ENCODE measurements at regions of chr7 and their contacts with region 1.

Region 1: DNA sequence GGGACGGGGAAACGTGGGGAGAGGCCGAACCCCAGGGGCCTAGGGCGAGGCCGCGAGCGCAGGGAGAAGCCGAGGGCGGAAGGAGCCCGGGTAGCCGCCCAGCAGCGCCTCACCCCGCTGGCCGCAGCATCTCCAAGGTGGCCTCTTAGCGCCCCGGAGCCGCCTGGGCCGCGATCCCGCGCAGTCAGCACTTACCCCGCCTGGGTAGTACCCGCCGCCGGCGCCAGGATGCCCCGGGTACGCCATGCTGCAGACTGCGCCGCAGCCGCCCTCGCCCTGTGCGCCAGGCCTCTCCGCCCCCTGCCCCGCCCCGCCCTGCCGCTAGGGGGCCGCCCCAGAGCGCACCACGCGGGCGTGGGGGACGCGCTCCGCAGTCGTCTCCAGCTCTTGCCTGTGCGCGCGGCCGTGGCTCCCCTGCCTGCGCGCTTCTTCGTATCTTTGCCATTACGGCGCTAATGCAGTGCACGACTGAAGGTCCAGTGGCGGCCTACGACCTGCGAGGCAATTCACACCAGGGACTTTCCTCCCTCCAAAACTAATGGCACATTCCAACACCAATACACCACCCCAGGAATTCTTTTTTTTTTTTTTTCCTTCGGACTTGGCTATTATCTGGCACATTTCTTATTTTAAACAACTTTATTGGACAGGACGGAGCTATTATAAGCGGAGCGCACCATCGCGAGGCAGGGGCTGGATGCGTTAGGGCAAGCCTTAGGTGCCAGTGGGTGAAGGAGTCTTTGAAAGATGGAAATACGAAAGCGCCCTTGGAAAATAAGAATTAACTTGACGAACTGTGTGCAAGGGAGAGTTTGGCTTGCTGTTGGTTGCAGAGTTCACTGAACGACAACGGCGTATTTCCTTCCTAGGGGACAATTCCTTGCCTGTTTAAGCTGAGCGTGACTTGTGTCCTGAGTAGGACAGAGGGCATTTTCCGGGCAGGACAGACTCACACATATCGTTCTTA is at the start of gene SRI:
- DNase-seq: peak; percentile 79 to 93
- H3K4me3 ChIP-seq: peak within 1 kb of the TSS; percentile 77
- H3K27ac ChIP-seq: peak within 1 kb of the TSS; percentile 97
- H3K4me1 ChIP-seq: peaks cover 46% of the 10 kb centered on the region
- H3K27me3 ChIP-seq: no peaks in the 10 kb centered on the region
- CTCF ChIP-seq: peak; percentile 88
- total RNA-seq, gene SRI: 235 and 269 TPM in 2 replicates

Region 2: GRCh38 chr7:87574630-87575029 is 645.4 kb before region 1 on chr7:
- CTCF ChIA-PET with region 1: no interaction called
- POLR2A ChIA-PET with region 1: no interaction called
- intact Hi-C with region 1: no loop called
- DNase-seq: peak in 1 of 2 experiments; percentile 40
- H3K4me3 ChIP-seq: no peak overlapping the region
- H3K27ac ChIP-seq: no peak overlapping the region
- H3K4me1 ChIP-seq: no peaks in the 10 kb centered on the region
- H3K27me3 ChIP-seq: no peaks in the 10 kb centered on the region
- CTCF ChIP-seq: no peak

Region 3: GRCh38 chr7:87876040-87876868 is 343.8 kb before region 1 on chr7 and contains the starts of genes DBF4 and SLC25A40:
- CTCF ChIA-PET with region 1: no interaction called
- POLR2A ChIA-PET with region 1: no interaction called
- intact Hi-C with region 1: loop called (anchors 5 kb)
- DNase-seq: peak; percentile 91 to 99
- H3K4me3 ChIP-seq: peak within 1 kb of the TSS; percentile 92
- H3K27ac ChIP-seq: peak within 1 kb of the TSS; percentile 85
- H3K4me1 ChIP-seq: peaks cover 28% of the 10 kb centered on the region
- H3K27me3 ChIP-seq: no peaks in the 10 kb centered on the region
- CTCF ChIP-seq: no peak
- total RNA-seq, gene DBF4: 47.9 and 52.7 TPM in 2 replicates
- total RNA-seq, gene SLC25A40: 33.5 and 47.7 TPM in 2 replicates

Region 4: GRCh38 chr7:87933945-87934698 is 285.9 kb before region 1 on chr7 and contains the start of gene ADAM22:
- CTCF ChIA-PET with region 1: interaction called, 3 read pairs
- POLR2A ChIA-PET with region 1: no interaction called
- intact Hi-C with region 1: loop called (anchors 10 kb)
- DNase-seq: peak; percentile 72 to 91
- H3K4me3 ChIP-seq: peak within 1 kb of the TSS; percentile 77
- H3K27ac ChIP-seq: no peak within 1 kb of the TSS
- H3K4me1 ChIP-seq: no peaks in the 10 kb centered on the region
- H3K27me3 ChIP-seq: no peaks in the 10 kb centered on the region
- CTCF ChIP-seq: no peak
- total RNA-seq, gene ADAM22: 13.0 and 14.0 TPM in 2 replicates

Region 5: DNA sequence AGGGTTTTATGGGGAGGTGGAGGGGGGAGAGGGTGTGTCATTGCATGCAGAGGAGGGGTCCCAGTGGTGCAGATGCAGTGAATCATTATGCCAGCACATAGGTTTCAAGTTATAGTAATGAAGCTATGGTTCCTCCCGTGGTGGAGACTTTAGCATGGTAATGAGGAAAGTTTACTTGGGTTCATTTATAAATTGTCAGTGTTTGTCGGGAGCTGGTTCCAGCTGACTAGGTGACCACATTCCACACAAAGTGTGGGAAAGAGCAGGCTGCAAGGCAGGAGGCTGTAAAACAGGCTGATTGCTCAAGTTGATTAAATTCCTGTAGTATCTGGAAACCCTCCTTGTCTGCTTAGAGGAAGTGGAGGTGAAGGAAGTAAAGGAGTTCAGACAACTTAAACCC is 79.1 kb before region 1 on chr7:
- CTCF ChIA-PET with region 1: no interaction called
- POLR2A ChIA-PET with region 1: interaction called, 6 read pairs
- intact Hi-C with region 1: loop called (anchors 2 kb)
- DNase-seq: peak; percentile 68 to 95
- H3K4me3 ChIP-seq: no peak overlapping the region
- H3K27ac ChIP-seq: peak overlapping the region; percentile 56
- H3K4me1 ChIP-seq: peaks cover 28% of the 10 kb centered on the region
- H3K27me3 ChIP-seq: no peaks in the 10 kb centered on the region
- CTCF ChIP-seq: no peak

Region 6: GRCh38 chr7:88233828-88234227 is 13.8 kb after region 1 on chr7:
- CTCF ChIA-PET with region 1: interaction called, 7 read pairs
- POLR2A ChIA-PET with region 1: interaction called, 21 read pairs
- intact Hi-C with region 1: no loop called
- DNase-seq: peak; percentile 14 to 70
- H3K4me3 ChIP-seq: no peak overlapping the region
- H3K27ac ChIP-seq: peak overlapping the region; percentile 42
- H3K4me1 ChIP-seq: peaks cover 15% of the 10 kb centered on the region
- H3K27me3 ChIP-seq: no peaks in the 10 kb centered on the region
- CTCF ChIP-seq: no peak

Region 7: GRCh38 chr7:88492153-88492552 is 272.1 kb after region 1 on chr7:
- CTCF ChIA-PET with region 1: no interaction called
- POLR2A ChIA-PET with region 1: no interaction called
- intact Hi-C with region 1: no loop called
- DNase-seq: no peak
- H3K4me3 ChIP-seq: no peak overlapping the region
- H3K27ac ChIP-seq: no peak overlapping the region
- H3K4me1 ChIP-seq: no peaks in the 10 kb centered on the region
- H3K27me3 ChIP-seq: no peaks in the 10 kb centered on the region
- CTCF ChIP-seq: no peak

Region 8: DNA sequence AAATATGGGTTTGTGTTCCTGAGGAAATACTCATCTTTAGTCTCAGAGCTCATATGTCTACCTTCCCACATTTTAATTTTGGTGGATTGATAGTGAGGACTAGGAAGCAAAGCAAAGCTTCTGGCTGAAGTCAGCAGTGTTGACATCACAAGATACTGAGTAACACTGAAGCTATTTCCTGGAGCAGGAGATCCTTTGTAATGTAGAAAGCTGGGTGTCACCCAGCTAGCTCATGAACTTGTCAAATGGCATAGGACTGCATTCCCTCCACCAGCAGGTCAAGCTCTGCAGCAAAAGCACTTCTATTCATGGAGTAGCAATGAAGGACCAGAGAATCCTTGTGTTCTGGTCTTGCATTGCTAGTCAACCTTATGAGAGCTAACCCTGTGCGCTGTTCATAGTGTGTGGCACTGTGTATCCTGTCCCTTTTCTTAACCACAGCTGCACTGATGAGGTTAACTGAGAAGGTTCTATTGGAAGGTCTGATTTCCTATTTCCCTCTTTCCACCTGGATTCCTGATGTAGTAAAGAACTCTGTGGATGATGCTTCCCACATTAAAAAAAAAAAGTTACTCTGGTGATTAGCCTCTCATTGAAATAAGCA is 444.7 kb after region 1 on chr7:
- CTCF ChIA-PET with region 1: no interaction called
- POLR2A ChIA-PET with region 1: no interaction called
- intact Hi-C with region 1: loop called (anchors 10 kb)
- DNase-seq: peak; percentile 44 to 51
- H3K4me3 ChIP-seq: no peak overlapping the region
- H3K27ac ChIP-seq: no peak overlapping the region
- H3K4me1 ChIP-seq: peaks cover 14% of the 10 kb centered on the region
- H3K27me3 ChIP-seq: no peaks in the 10 kb centered on the region
- CTCF ChIP-seq: no peak